ENCODE measurements at regions of chr6 and their contacts with region 1.

Region 1: GRCh38 chr6:30571075-30571768 is at the start of gene ABCF1:
- DNase-seq: peak; percentile 83
- H3K4me3 ChIP-seq: peak within 1 kb of the TSS; percentile 85
- H3K27me3 ChIP-seq: no peaks in the 10 kb centered on the region
- CTCF ChIP-seq: no peak
- polyA plus RNA-seq, gene ABCF1: 30.0 and 37.9 TPM in 2 replicates

Region 2: GRCh38 chr6:30590994-30591393 is 19.8 kb after region 1 on chr6:
- CTCF ChIA-PET with region 1: interaction called, 4 read pairs
- POLR2A ChIA-PET with region 1: interaction called, 13 read pairs
- DNase-seq: no peak
- H3K4me3 ChIP-seq: no peak overlapping the region
- H3K27me3 ChIP-seq: no peaks in the 10 kb centered on the region
- CTCF ChIP-seq: no peak

Measured in BJ (cell line).